Motor neuron (in vitro differentiated cells): ENCODE measurements at regions of chr5 and their contacts with region 1.

Region 1: DNA sequence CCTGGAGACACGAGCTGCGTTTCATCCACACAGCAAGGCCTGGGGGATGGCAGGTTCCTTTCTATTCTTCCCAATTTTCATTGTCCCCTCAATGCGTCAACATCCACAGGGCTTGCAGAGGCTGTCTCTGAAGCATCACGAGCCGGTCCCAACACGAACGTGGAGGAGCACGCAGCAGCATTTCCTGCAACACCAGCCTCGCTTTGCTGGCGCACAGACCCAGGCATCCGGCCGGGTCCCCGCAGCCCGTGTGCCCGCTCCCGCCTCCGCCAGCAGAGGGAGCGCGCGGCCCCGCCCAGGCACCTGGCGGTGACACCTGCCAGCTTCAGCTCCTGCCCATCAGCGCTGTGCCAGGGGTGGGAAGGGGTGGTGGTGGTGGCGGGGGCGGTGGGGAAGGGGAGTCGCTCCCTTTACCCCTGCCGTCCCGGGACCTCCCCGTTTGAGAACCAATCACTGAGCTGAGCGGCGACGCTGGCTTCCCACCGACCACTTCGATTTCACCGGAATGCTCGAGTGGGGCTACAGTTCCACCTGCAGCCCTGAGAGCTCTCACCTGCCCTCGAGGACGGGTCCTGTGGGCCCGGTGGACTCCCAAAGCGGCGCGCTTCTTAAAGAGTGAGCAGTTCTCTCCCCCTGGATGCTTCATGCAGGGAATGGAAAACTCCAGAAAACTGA is 464.5 kb downstream of the ICE1 start:
- ATAC-seq: peak in 1 of 8 experiments; percentile 89
- H3K4me3 ChIP-seq: no peak overlapping the region
- H3K27ac ChIP-seq: no peak overlapping the region
- H3K4me1 ChIP-seq: peaks cover 8 to 26% of the 10 kb centered on the region in 2 donors

Region 2: DNA sequence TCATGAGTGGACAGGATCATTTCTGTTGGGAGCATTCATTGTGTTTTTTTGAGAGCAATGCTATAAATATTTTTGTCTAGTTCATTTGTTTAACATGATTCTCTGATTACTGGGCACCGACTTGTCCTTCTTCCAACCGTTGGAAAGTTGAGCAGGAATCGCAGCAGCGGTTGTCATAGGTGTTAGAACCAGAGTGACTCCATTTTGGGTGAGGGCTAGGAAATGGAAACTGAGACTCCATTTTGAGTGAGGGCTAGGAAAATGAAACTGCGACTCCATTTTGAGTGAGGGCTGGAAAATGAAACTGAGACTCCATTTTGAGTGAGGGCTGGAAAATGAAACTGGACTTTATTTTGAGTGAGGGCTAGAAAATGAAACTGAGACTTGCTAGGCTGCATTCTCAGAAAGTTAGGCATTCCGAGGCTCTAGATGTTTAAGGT is 363.9 kb before region 1 on chr5:
- in situ Hi-C with region 1: loop called in 1 of 9 experiments (anchors 25 kb)
- ATAC-seq: no peak
- H3K4me3 ChIP-seq: no peak overlapping the region
- H3K27ac ChIP-seq: no peak overlapping the region
- H3K4me1 ChIP-seq: no peaks in the 10 kb centered on the region